ENCODE measurements at regions of chr16 and their contacts with region 1.

Region 1: DNA sequence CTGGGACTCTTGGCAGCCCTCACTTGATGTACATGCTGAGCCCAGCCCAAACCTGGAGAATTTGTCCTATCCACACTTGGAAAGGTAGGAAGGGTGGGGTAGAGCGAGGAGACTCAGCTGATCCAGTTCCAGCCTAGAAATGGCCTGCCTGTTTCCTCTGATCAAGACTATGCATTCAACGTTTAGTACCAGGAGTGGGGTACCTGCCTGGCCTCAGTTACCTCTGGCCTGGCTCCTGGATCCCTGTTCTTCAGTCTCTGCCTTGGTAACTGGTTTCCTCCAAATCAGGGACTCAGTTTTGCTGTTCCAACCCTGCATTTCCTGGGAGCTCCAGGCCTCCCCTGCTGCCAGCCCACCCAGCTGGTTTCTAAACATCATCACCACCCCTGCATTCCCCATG is 233.5 kb downstream of the GSG1L start:
- DNase-seq: peak; percentile 45

Region 2: DNA sequence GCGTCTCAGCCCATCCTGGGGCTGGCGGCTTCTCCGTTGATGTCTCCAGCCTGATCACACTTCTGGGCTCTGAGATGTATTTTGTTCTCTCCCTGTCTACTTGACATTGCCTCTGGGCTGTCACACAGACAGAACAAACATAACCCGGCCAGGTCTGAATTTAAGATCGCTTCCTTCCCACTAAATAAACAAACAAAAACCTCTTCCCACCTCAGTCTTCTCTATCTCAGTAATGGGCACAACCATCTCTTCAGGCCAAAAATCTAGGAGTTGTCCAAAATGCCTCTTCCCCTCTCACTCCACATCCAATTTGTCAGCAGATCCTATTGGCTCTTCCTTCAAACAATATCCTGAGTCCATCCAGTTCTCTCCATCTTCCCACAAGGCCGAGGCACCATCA is 202.5 kb after region 1 on chr16:
- intact Hi-C with region 1: loop called in 1 of 2 experiments (anchors 5 kb)
- DNase-seq: peak; percentile 35

Measured in posterior vena cava (tissue), 2 donors.